Psoas muscle (tissue), 8 donors: ENCODE measurements at regions of chr17 and their contacts with region 1.

Region 1: GRCh38 chr17:59783221-59784047 is 76.0 kb downstream of the VMP1 start:
- DNase-seq: no peak
- ATAC-seq: no peak
- H3K4me3 ChIP-seq: no peak overlapping the region
- H3K27ac ChIP-seq: peak overlapping the region; percentile 43
- H3K4me1 ChIP-seq: peaks cover 44% of the 10 kb centered on the region
- H3K27me3 ChIP-seq: no peaks in the 10 kb centered on the region
- CTCF ChIP-seq: no peak

Region 2: GRCh38 chr17:59668816-59669215 is 114.6 kb before region 1 on chr17:
- intact Hi-C with region 1: no loop called
- DNase-seq: no peak
- ATAC-seq: no peak
- H3K4me3 ChIP-seq: no peak overlapping the region
- H3K27ac ChIP-seq: no peak overlapping the region
- H3K4me1 ChIP-seq: no peaks in the 10 kb centered on the region
- H3K27me3 ChIP-seq: no peaks in the 10 kb centered on the region
- CTCF ChIP-seq: no peak

Region 3: GRCh38 chr17:59769891-59770290 is 13.5 kb before region 1 on chr17:
- intact Hi-C with region 1: loop called in 1 of 2 experiments (anchors 1 kb)
- DNase-seq: no peak
- ATAC-seq: peak in 1 of 4 donors; percentile 15
- H3K4me3 ChIP-seq: no peak overlapping the region
- H3K27ac ChIP-seq: peak overlapping the region; percentile 64
- H3K4me1 ChIP-seq: no peaks in the 10 kb centered on the region
- H3K27me3 ChIP-seq: no peaks in the 10 kb centered on the region
- CTCF ChIP-seq: no peak

Region 4: DNA sequence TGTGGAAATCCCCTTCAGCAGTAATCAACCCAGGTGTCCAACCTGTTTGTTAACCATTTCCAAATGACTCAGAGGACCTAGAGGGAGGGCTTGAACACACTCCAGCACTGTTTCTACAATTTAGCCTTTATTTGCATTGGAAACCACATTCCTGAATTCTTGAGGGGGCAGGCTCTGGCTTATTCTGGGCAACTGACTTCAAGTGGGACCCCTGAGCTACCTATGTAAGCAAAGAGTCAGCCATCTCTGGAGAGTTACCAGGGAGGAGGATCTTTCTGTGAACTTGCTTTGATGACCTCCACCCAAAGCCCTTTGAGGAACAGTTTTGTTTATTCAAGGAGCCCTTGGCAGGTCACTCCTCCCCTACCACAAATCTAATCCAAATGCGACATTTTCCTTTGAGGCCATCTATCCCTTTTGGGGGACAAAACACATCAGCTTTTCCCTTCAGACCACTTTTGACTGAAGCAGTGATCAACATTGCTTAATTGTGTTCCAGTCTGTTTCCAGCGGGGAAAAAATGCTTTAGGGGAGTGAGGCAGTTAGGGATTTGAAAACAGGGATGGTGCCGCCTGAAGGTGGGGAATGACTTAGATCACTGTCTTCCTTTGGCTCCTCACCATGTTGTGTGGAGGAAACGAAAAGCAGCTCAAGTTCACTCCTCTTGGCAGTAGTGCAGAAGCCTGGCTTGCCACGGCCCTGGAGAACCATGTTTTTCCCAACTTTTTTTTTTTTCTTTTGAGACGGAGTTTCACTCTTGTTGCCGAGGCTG is 63.1 kb after region 1 on chr17:
- intact Hi-C with region 1: loop called in 1 of 2 experiments (anchors 2 kb)
- DNase-seq: peak; percentile 41 to 79
- ATAC-seq: peak; percentile 24 to 65 (median 48)
- H3K4me3 ChIP-seq: peak overlapping the region; percentile 9
- H3K27ac ChIP-seq: peak overlapping the region; percentile 92
- H3K4me1 ChIP-seq: peaks cover 40% of the 10 kb centered on the region
- H3K27me3 ChIP-seq: no peaks in the 10 kb centered on the region
- CTCF ChIP-seq: no peak

Region 5: GRCh38 chr17:59901604-59902003 is 118.2 kb after region 1 on chr17:
- intact Hi-C with region 1: no loop called
- DNase-seq: no peak
- ATAC-seq: no peak
- H3K4me3 ChIP-seq: no peak overlapping the region
- H3K27ac ChIP-seq: no peak overlapping the region
- H3K4me1 ChIP-seq: peaks cover 13% of the 10 kb centered on the region
- H3K27me3 ChIP-seq: no peaks in the 10 kb centered on the region
- CTCF ChIP-seq: no peak